AG04450 (cell line): ENCODE measurements at regions of chr7 and their contacts with region 1.

Region 1: GRCh38 chr7:130941322-130942210 is 207.6 kb upstream of the KLF14 start:
- DNase-seq: no peak
- H3K4me3 ChIP-seq: peak overlapping the region; percentile 80
- H3K27ac ChIP-seq: peak overlapping the region; percentile 97
- H3K27me3 ChIP-seq: no peaks in the 10 kb centered on the region
- CTCF ChIP-seq: no peak

Region 2: GRCh38 chr7:130912862-130913631 is 28.5 kb before region 1 on chr7:
- CTCF ChIA-PET with region 1: no interaction called
- POLR2A ChIA-PET with region 1: interaction called, 47 read pairs
- DNase-seq: peak; percentile 95
- H3K4me3 ChIP-seq: peak overlapping the region; percentile 59
- H3K27ac ChIP-seq: peak overlapping the region; percentile 97
- H3K27me3 ChIP-seq: no peaks in the 10 kb centered on the region
- CTCF ChIP-seq: no peak

Region 3: DNA sequence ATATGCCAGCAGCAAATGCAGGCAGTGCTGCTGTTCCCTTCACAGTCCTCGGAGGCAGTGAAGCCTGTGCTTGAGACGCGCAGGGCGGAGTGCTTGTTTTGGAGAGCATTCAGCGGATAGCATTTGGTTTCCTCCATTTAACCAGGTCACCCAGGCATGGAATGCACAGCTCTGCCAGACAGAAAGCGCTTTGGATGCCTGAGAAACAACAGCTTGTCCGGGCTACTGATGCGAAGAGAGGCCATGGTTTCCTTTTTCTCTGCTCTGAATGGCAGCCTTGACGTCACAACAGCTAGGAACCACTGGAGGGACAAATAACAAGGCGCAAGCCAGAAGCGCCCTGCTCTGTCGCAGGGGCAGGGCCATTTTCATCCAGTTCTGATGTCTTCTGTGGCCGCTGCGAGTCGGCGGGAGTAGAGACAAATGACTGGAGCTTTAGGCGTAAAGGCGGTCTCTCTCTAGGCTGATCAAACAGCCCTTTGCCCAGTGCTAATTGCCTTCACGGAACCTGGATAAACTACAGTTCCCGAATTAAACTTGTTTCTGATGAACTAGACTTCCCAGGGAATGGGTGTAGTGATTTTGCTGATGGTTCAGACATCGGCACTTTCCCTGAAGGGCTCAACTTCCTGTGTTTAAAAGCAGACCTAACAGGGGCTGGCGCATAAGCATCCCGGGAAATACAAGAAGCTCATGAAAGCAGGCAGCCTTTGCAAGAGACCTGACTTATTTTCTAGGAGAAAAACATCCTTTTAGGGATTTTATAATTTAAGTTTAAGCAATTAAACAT is 20.0 kb before region 1 on chr7:
- CTCF ChIA-PET with region 1: interaction called, 4 read pairs
- POLR2A ChIA-PET with region 1: interaction called, 10 read pairs
- DNase-seq: peak; percentile 80
- H3K4me3 ChIP-seq: peak overlapping the region; percentile 37
- H3K27ac ChIP-seq: peak overlapping the region; percentile 97
- H3K27me3 ChIP-seq: no peaks in the 10 kb centered on the region
- CTCF ChIP-seq: no peak

Region 4: DNA sequence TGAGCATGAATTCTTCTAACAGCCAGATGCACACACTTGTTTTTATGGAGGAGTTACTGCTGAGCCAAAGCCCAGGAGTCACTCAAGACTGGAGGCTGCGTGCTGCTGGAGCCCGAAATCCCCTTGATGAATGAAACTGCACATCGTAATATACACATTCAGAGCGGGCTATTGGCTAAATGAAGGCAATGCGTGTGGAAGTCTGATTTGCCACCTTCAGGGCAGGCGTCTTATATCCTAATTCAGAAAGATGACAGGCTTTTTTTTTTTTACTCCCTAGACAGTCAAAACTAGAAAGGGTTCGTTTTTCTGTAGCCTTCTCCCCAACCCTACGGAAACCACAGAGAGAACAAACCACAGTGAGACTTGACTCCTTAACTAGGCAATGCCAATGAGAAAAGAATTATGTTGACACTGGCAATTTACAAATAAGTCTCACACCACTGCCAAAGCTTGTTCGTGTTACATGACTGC is 19.6 kb after region 1 on chr7:
- CTCF ChIA-PET with region 1: interaction called, 60 read pairs
- POLR2A ChIA-PET with region 1: interaction called, 8 read pairs
- DNase-seq: no peak
- H3K4me3 ChIP-seq: peak overlapping the region; percentile 26
- H3K27ac ChIP-seq: peak overlapping the region; percentile 97
- H3K27me3 ChIP-seq: no peaks in the 10 kb centered on the region
- CTCF ChIP-seq: no peak